SK-N-SH (cell line): ENCODE measurements at regions of chr12 and their contacts with region 1.

Region 1: GRCh38 chr12:113980537-113981337 is 14.6 kb upstream of the RBM19 start:
- DNase-seq: peak; percentile 57
- H3K4me3 ChIP-seq: peak overlapping the region in 1 of 2 experiments; percentile 20; a peak in 1 of 4 replicates
- H3K27ac ChIP-seq: no peak overlapping the region
- H3K4me1 ChIP-seq: no peaks in the 10 kb centered on the region
- H3K27me3 ChIP-seq: peaks cover 26% of the 10 kb centered on the region; the same call in 1 of the 2 replicates
- CTCF ChIP-seq: peak; percentile 97
- EP300 ChIP-seq: no peak
- RAD21 ChIP-seq: peak; percentile 96

Region 2: GRCh38 chr12:113996026-113996425 is 15.3 kb after region 1 on chr12:
- CTCF ChIA-PET with region 1: interaction called, 32 read pairs
- POLR2A ChIA-PET with region 1: no interaction called
- DNase-seq: no peak
- H3K4me3 ChIP-seq: no peak overlapping the region
- H3K27ac ChIP-seq: no peak overlapping the region
- H3K4me1 ChIP-seq: no peaks in the 10 kb centered on the region
- H3K27me3 ChIP-seq: peaks cover 21% of the 10 kb centered on the region; the same call in 1 of the 2 replicates
- CTCF ChIP-seq: no peak
- EP300 ChIP-seq: no peak
- RAD21 ChIP-seq: no peak

Region 3: GRCh38 chr12:114480337-114481199 is 499.8 kb after region 1 on chr12:
- CTCF ChIA-PET with region 1: interaction called, 14 read pairs
- POLR2A ChIA-PET with region 1: no interaction called
- DNase-seq: no peak
- H3K4me3 ChIP-seq: no peak overlapping the region
- H3K27ac ChIP-seq: no peak overlapping the region
- H3K4me1 ChIP-seq: no peaks in the 10 kb centered on the region
- H3K27me3 ChIP-seq: peaks cover 51% of the 10 kb centered on the region
- CTCF ChIP-seq: no peak
- EP300 ChIP-seq: no peak
- RAD21 ChIP-seq: no peak

Region 4: DNA sequence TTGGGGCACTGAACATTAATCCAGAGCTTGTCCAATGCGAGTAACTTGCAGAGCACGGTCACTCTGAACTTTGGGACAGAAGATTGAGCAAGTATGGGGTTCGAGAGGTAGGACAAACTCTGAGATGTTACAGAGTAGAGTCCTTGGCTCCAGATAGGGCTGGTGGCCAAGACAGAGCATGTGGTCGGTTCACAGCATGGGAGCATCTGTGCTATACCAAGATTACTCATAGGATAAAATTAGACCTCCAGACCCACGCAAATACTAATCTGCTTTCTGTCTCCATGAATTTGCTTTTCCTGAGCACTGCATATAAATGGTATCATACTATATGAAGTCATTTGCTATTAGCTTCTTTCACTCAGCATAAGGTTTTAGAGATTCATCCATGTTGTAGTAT is 518.6 kb after region 1 on chr12:
- CTCF ChIA-PET with region 1: interaction called, 21 read pairs
- POLR2A ChIA-PET with region 1: no interaction called
- DNase-seq: no peak
- H3K4me3 ChIP-seq: no peak overlapping the region
- H3K27ac ChIP-seq: no peak overlapping the region
- H3K4me1 ChIP-seq: no peaks in the 10 kb centered on the region
- H3K27me3 ChIP-seq: peaks cover 21% of the 10 kb centered on the region; the same call in 1 of the 2 replicates
- CTCF ChIP-seq: no peak
- EP300 ChIP-seq: no peak
- RAD21 ChIP-seq: no peak

Region 5: GRCh38 chr12:114636723-114637483 is 656.2 kb after region 1 on chr12:
- CTCF ChIA-PET with region 1: interaction called, 21 read pairs
- POLR2A ChIA-PET with region 1: no interaction called
- DNase-seq: peak; percentile 56
- H3K4me3 ChIP-seq: no peak overlapping the region
- H3K27ac ChIP-seq: no peak overlapping the region
- H3K4me1 ChIP-seq: no peaks in the 10 kb centered on the region
- H3K27me3 ChIP-seq: no peaks in the 10 kb centered on the region
- CTCF ChIP-seq: peak; percentile 40
- EP300 ChIP-seq: no peak
- RAD21 ChIP-seq: peak; percentile 40